Endothelial cell of umbilical vein (primary cell): ENCODE measurements at regions of chr4 and their contacts with region 1.

Region 1: GRCh38 chr4:137735561-137736104 is 203.3 kb upstream of the PCDH18 start:
- DNase-seq: no peak
- H3K4me3 ChIP-seq: no peak overlapping the region
- H3K27ac ChIP-seq: no peak overlapping the region
- H3K4me1 ChIP-seq: no peaks in the 10 kb centered on the region
- H3K27me3 ChIP-seq: no peaks in the 10 kb centered on the region
- CTCF ChIP-seq: no peak
- POLR2A ChIP-seq: no peak

Region 2: DNA sequence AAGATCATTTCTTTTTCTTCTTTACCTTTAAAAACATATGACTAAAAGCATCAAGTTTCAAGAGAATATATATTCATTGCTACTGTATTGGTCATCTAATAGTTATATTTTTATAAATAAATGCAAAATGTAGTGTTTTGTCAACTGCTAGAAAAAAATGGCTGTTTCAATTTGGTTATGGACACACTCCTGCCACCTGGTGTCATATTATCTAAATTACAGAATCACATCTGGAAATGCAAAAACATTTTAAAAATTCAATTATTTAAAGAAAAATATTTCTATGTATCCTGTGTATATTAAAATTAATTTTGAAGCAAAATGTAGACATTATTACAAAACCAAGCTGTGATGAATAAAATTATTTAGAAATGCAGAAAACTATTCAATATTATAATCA is 126.0 kb after region 1 on chr4:
- CTCF ChIA-PET with region 1: interaction called, 12 read pairs
- POLR2A ChIA-PET with region 1: no interaction called
- dilution Hi-C with region 1: no loop called
- intact Hi-C with region 1: loop called (anchors 1 kb)
- DNase-seq: peak; percentile 32
- H3K4me3 ChIP-seq: no peak overlapping the region
- H3K27ac ChIP-seq: no peak overlapping the region
- H3K4me1 ChIP-seq: no peaks in the 10 kb centered on the region
- H3K27me3 ChIP-seq: no peaks in the 10 kb centered on the region
- CTCF ChIP-seq: peak; percentile 11 to 18
- POLR2A ChIP-seq: no peak

Region 3: DNA sequence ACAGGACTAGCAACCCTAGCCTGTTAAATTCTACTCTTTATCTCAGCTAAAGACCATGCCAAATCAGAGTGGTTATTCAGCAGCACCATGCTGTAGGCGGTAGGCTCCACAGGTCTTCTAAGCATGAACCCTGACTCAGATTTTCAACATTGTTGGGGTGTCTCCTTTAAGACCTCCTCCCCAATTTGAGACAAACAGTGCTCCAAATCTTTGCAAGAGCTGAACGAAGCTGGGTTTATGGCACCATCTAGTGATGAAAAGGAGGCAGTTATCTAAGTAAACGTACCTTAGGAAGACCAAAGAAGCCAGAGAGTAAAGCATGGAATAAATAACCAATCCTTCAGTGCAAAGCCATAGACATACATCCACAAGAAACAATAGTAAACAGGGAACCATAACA is 841.1 kb after region 1 on chr4:
- CTCF ChIA-PET with region 1: interaction called, 8 read pairs
- POLR2A ChIA-PET with region 1: no interaction called
- dilution Hi-C with region 1: no loop called
- intact Hi-C with region 1: loop called (anchors 5 kb)
- DNase-seq: peak; percentile 57
- H3K4me3 ChIP-seq: no peak overlapping the region
- H3K27ac ChIP-seq: no peak overlapping the region
- H3K4me1 ChIP-seq: no peaks in the 10 kb centered on the region
- H3K27me3 ChIP-seq: peaks cover under 1 to 3% of the 10 kb centered on the region in 2 experiments
- CTCF ChIP-seq: peak; percentile 31 to 53
- POLR2A ChIP-seq: no peak

Region 4: GRCh38 chr4:138680989-138681604 is 945.5 kb after region 1 on chr4:
- CTCF ChIA-PET with region 1: interaction called, 22 read pairs
- POLR2A ChIA-PET with region 1: no interaction called
- dilution Hi-C with region 1: no loop called
- intact Hi-C with region 1: loop called (anchors 1 kb)
- DNase-seq: peak; percentile 58
- H3K4me3 ChIP-seq: no peak overlapping the region
- H3K27ac ChIP-seq: no peak overlapping the region
- H3K4me1 ChIP-seq: no peaks in the 10 kb centered on the region
- H3K27me3 ChIP-seq: peaks cover 24 to 48% of the 10 kb centered on the region in 2 experiments
- CTCF ChIP-seq: peak; percentile 72 to 76
- POLR2A ChIP-seq: no peak